Breast epithelium (tissue), 4 donors: ENCODE measurements at regions of chr10 and their contacts with region 1.

Region 1: GRCh38 chr10:95363303-95363912 is 72.6 kb upstream of the PDLIM1 start:
- DNase-seq: no peak
- H3K4me3 ChIP-seq: no peak overlapping the region
- H3K27ac ChIP-seq: no peak overlapping the region
- H3K4me1 ChIP-seq: no peaks in the 10 kb centered on the region
- H3K27me3 ChIP-seq: no peaks in the 10 kb centered on the region
- CTCF ChIP-seq: peak; percentile 83 to 91 (median 89)
- POLR2A ChIP-seq: no peak

Region 2: DNA sequence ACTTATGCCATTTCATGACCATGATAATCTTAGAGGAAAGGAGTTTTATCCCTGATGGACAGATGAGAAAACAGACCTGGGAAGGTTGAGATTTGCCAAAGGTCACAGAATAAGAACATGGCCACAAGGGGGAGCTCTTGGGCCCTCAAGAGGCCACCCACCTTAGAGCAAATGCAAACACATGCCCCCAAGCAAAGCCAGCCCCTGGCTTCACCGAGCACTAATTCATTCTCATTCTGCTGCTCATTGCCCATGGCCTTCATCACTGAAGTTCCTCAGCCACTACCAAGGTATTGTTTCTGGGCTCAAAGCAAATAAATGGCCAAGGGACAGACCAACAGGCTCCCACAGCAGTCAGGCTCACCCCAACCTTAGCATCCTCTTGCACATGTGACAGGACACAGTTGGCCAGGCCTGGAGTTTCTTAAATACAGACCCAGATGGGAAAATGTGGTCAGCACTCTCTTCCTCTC is 116.8 kb before region 1 on chr10:
- intact Hi-C with region 1: loop called (anchors 10 kb)
- DNase-seq: peak in 1 of 2 donors; percentile 59
- H3K4me3 ChIP-seq: no peak overlapping the region
- H3K27ac ChIP-seq: peak overlapping the region; percentile 72 to 79
- H3K4me1 ChIP-seq: peaks cover 5 to 13% of the 10 kb centered on the region in 2 donors
- H3K27me3 ChIP-seq: no peaks in the 10 kb centered on the region
- CTCF ChIP-seq: peak; percentile 72 to 85 (median 73)
- POLR2A ChIP-seq: no peak

Region 3: DNA sequence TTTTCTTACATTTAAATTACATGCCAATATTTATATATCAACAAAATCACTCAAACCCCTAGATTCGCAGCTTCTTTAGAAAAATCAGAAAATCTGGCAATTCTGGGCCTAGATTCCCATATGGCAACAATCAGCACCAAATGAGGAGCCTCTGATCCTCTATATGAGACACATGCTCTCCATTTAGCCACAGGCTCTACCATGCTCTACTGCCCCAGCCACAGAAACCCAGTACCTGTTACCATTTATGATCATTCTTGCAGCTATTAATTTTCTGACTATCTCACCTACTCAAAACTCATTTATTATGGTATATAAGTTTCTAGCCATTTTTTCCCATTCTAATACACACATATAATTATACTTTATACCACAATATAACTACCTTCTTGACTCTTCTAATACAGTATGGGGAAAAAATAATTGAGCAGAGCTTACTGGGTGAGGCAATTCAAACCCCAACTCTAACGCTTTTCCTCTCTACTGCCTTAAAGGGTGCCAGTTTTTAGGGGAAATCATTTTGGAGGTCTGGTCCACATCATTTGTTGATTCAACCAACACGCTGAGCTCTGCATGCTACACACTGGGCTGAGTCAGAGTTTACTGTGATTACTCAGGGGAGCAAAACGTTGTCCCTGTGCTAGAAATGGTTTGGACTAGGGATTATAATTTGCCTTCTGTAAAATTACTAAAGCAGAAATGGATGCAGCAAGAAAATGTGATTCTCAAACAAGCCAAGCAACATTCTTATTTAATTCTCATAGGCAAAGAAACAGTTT is 84.2 kb before region 1 on chr10:
- intact Hi-C with region 1: no loop called
- DNase-seq: no peak
- H3K4me3 ChIP-seq: no peak overlapping the region
- H3K27ac ChIP-seq: peak overlapping the region; percentile 81 to 88
- H3K4me1 ChIP-seq: peaks cover 3 to 7% of the 10 kb centered on the region in 2 donors
- H3K27me3 ChIP-seq: no peaks in the 10 kb centered on the region
- CTCF ChIP-seq: no peak
- POLR2A ChIP-seq: no peak

Region 4: GRCh38 chr10:95864906-95865813 is 501.8 kb after region 1 on chr10:
- intact Hi-C with region 1: loop called (anchors 5 kb)
- DNase-seq: peak in 1 of 2 donors; percentile 24
- H3K4me3 ChIP-seq: no peak overlapping the region
- H3K27ac ChIP-seq: peak overlapping the region; percentile 44 to 82
- H3K4me1 ChIP-seq: no peaks in the 10 kb centered on the region
- H3K27me3 ChIP-seq: no peaks in the 10 kb centered on the region
- CTCF ChIP-seq: peak in 2 of 3 donors; percentile 37 to 51
- POLR2A ChIP-seq: no peak